ENCODE measurements at regions of chr11 and their contacts with region 1.

Region 1: DNA sequence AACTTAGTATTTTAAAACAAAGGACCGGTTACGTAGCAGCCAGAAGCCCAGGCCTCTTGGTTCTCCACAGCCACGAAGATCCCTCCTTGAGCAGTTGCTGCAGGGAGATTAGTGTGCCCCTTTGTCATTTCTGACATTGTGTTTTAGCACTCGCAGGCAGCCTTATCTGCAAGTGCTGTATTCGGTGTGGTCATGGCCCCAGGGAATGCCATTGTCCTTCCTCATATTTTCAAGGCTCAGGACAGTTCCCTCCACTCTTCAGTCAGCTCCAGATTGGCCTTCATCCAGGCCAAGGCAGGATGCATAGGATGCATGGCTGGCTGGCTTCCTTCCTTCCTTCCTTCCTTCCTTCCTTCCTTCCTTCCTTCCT is 88.5 kb downstream of the ZBTB16 start:
- DNase-seq: no peak
- H3K4me3 Mint-ChIP-seq: no peak overlapping the region
- H3K27ac Mint-ChIP-seq: no peak overlapping the region
- H3K4me1 Mint-ChIP-seq: peaks cover 13% of the 10 kb centered on the region
- H3K27me3 Mint-ChIP-seq: peaks cover 19% of the 10 kb centered on the region

Region 2: GRCh38 chr11:114131461-114131864 is 16.5 kb before region 1 on chr11:
- intact Hi-C with region 1: loop called (anchors 2 kb)
- DNase-seq: no peak
- H3K4me3 Mint-ChIP-seq: no peak overlapping the region
- H3K27ac Mint-ChIP-seq: no peak overlapping the region
- H3K4me1 Mint-ChIP-seq: peaks cover 11% of the 10 kb centered on the region
- H3K27me3 Mint-ChIP-seq: peaks cover 2% of the 10 kb centered on the region